AG04449 (cell line): ENCODE measurements at regions of chr19 and their contacts with region 1.

Region 1: GRCh38 chr19:46944918-46945628 is 74.6 kb upstream of the NPAS1 start:
- DNase-seq: no peak
- H3K4me3 ChIP-seq: peak overlapping the region; percentile 27
- CTCF ChIP-seq: no peak

Region 2: GRCh38 chr19:46954993-46955812 is 10.1 kb after region 1 on chr19:
- CTCF ChIA-PET with region 1: interaction called, 14 read pairs
- POLR2A ChIA-PET with region 1: interaction called, 3 read pairs
- DNase-seq: no peak
- H3K4me3 ChIP-seq: no peak overlapping the region
- CTCF ChIP-seq: no peak